Calu3 (cell line): ENCODE measurements at regions of chr3 and their contacts with region 1.

Region 1: GRCh38 chr3:153161138-153161713 is 800 bp upstream of the RAP2B start:
- DNase-seq: peak; percentile 97
- H3K4me3 Mint-ChIP-seq: peak overlapping the region; percentile 99
- H3K27ac Mint-ChIP-seq: peak overlapping the region; percentile 97
- H3K4me1 Mint-ChIP-seq: peaks cover 52% of the 10 kb centered on the region
- H3K27me3 Mint-ChIP-seq: no peaks in the 10 kb centered on the region
- CTCF ChIP-seq: no peak

Region 2: GRCh38 chr3:152961323-152961722 is 199.9 kb before region 1 on chr3:
- CTCF ChIA-PET with region 1: no interaction called
- intact Hi-C with region 1: loop called (anchors 5 kb)
- DNase-seq: peak; percentile 80
- H3K4me3 Mint-ChIP-seq: peak overlapping the region; percentile 4
- H3K27ac Mint-ChIP-seq: peak overlapping the region; percentile 23
- H3K4me1 Mint-ChIP-seq: peaks cover 65% of the 10 kb centered on the region
- H3K27me3 Mint-ChIP-seq: no peaks in the 10 kb centered on the region
- CTCF ChIP-seq: peak; percentile 78

Region 3: DNA sequence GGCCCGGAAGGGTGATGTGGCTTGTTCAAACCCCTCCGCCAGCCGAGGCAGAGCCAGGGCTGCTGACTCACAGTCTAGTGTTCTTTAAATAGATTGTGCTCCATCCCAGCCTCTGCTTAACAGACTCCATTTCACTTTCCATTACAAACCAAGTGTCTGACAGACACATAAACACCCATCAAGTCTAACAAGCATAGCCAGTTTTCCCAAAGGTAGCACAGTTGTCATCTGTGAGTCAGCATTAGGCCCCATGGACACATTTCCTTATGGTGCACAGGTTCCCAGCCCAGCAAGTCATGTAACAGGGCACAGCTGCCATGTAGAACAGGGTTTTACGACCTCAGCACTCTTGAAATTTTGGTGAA is 109.1 kb before region 1 on chr3:
- CTCF ChIA-PET with region 1: interaction called, 27 read pairs
- intact Hi-C with region 1: loop called (anchors 1 kb)
- DNase-seq: peak; percentile 86
- H3K4me3 Mint-ChIP-seq: peak overlapping the region; percentile 63
- H3K27ac Mint-ChIP-seq: peak overlapping the region; percentile 100
- H3K4me1 Mint-ChIP-seq: peaks cover 49% of the 10 kb centered on the region
- H3K27me3 Mint-ChIP-seq: no peaks in the 10 kb centered on the region
- CTCF ChIP-seq: no peak

Region 4: GRCh38 chr3:153130312-153130990 is 30.8 kb before region 1 on chr3:
- CTCF ChIA-PET with region 1: interaction called, 10 read pairs
- intact Hi-C with region 1: no loop called
- DNase-seq: no peak
- H3K4me3 Mint-ChIP-seq: no peak overlapping the region
- H3K27ac Mint-ChIP-seq: peak overlapping the region; percentile 69
- H3K4me1 Mint-ChIP-seq: peaks cover 41% of the 10 kb centered on the region
- H3K27me3 Mint-ChIP-seq: no peaks in the 10 kb centered on the region
- CTCF ChIP-seq: no peak

Region 5: DNA sequence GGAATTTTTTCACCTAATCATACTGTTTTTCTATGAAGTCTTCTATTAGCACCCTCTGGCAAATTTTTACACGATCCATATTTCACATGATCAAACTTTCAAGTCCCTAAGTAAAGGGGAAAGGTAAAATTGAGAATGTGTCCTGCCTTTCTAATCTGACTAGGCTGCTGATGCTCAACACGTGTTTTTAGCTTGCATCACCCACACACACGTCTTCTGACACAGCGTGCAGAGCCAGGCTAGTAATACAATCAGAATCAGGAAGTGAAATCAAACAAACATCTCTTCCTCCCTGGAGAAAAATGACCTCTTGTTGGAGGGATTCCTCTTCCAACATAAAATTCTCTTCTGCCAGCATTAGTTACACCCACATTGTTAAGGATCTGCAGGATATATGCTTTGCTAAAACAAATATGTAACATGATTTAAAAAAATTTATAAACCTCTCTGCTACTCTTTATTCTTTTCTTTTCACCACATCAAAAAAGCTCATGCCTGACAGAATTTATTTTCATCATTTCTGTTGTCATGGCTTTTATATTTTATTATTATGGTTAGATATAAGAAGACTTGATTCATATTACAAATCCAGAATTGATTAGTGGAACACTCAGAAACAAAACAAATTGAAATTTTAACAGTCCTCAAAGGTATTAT is 123.2 kb after region 1 on chr3:
- CTCF ChIA-PET with region 1: interaction called, 10 read pairs
- intact Hi-C with region 1: loop called (anchors 2 kb)
- DNase-seq: peak; percentile 75
- H3K4me3 Mint-ChIP-seq: peak overlapping the region; percentile 19
- H3K27ac Mint-ChIP-seq: peak overlapping the region; percentile 99
- H3K4me1 Mint-ChIP-seq: peaks cover 39% of the 10 kb centered on the region
- H3K27me3 Mint-ChIP-seq: no peaks in the 10 kb centered on the region
- CTCF ChIP-seq: no peak

Region 6: GRCh38 chr3:153439777-153440176 is 278.6 kb after region 1 on chr3:
- CTCF ChIA-PET with region 1: interaction called, 5 read pairs
- intact Hi-C with region 1: loop called (anchors 5 kb)
- DNase-seq: no peak
- H3K4me3 Mint-ChIP-seq: no peak overlapping the region
- H3K27ac Mint-ChIP-seq: no peak overlapping the region
- H3K4me1 Mint-ChIP-seq: peaks cover 30% of the 10 kb centered on the region
- H3K27me3 Mint-ChIP-seq: no peaks in the 10 kb centered on the region
- CTCF ChIP-seq: no peak

Region 7: DNA sequence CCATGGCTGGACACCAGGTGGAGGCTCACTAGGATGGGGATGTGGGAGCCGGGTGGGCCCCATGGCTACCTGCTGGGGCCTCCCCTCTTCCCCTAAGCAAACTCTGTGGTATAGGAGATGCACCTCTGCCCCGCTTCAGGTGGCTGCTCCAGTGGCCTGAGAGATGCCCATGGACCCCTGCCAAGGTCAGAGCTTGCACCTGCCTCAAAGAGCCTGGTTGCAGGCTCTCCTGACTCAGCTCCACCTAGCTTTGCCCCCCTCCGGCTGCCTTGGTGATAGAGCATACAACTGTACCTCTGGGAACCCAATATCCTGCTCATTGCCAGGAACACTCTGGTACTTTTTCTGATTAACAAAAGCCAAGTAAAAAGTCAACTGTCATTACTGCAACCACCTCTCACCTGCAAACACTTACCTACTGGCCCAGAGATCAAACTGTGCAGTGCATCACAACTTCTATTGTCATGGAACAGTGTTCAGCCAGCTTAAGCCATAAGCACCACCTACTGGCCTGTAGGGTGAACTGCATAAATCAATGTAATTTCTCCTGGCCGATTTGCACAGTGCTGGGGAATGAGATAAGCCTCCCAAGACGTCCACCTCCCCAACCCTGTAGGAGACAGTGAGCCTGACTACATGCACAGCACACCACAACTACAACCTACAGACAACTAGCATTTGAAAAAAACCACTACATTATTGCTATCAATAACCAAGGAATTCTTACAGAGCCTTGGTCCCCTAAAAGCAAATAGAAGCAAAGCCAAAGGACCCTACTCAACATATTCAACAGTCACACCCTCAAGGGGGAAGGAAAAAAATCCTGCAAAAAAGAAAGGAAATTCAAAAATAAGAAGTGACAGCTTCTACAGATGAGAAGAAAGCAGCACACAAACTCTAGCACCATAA is 607.6 kb after region 1 on chr3:
- CTCF ChIA-PET with region 1: interaction called, 5 read pairs
- intact Hi-C with region 1: loop called (anchors 5 kb)
- DNase-seq: peak; percentile 75
- H3K4me3 Mint-ChIP-seq: no peak overlapping the region
- H3K27ac Mint-ChIP-seq: no peak overlapping the region
- H3K4me1 Mint-ChIP-seq: peaks cover 11% of the 10 kb centered on the region
- H3K27me3 Mint-ChIP-seq: no peaks in the 10 kb centered on the region
- CTCF ChIP-seq: peak; percentile 96